ENCODE measurements at regions of chrX and their contacts with region 1.

Region 1: GRCh38 chrX:107526141-107526540 is 76.7 kb downstream of the FRMPD3 start:
- DNase-seq: no peak
- H3K4me3 ChIP-seq: no peak overlapping the region
- H3K27ac ChIP-seq: no peak overlapping the region
- H3K4me1 ChIP-seq: no peaks in the 10 kb centered on the region
- H3K27me3 ChIP-seq: peaks cover 4% of the 10 kb centered on the region
- CTCF ChIP-seq: no peak

Region 2: GRCh38 chrX:107429090-107429489 is 97.1 kb before region 1 on chrX:
- CTCF ChIA-PET with region 1: no interaction called
- dilution Hi-C with region 1: loop called (anchors 5 kb)
- in situ Hi-C with region 1: no loop called
- intact Hi-C with region 1: no loop called
- DNase-seq: no peak
- H3K4me3 ChIP-seq: no peak overlapping the region
- H3K27ac ChIP-seq: no peak overlapping the region
- H3K4me1 ChIP-seq: no peaks in the 10 kb centered on the region
- H3K27me3 ChIP-seq: no peaks in the 10 kb centered on the region
- CTCF ChIP-seq: peak; percentile 40 to 58

Region 3: GRCh38 chrX:107602694-107603239 is 76.6 kb after region 1 on chrX:
- CTCF ChIA-PET with region 1: no interaction called
- dilution Hi-C with region 1: loop called (anchors 5 kb)
- in situ Hi-C with region 1: no loop called
- intact Hi-C with region 1: no loop called
- DNase-seq: no peak
- H3K4me3 ChIP-seq: no peak overlapping the region
- H3K27ac ChIP-seq: no peak overlapping the region
- H3K4me1 ChIP-seq: no peaks in the 10 kb centered on the region
- H3K27me3 ChIP-seq: no peaks in the 10 kb centered on the region
- CTCF ChIP-seq: no peak

Measured in mammary epithelial cell (primary cell).